ENCODE measurements at regions of chr9 and their contacts with region 1.

Region 1: DNA sequence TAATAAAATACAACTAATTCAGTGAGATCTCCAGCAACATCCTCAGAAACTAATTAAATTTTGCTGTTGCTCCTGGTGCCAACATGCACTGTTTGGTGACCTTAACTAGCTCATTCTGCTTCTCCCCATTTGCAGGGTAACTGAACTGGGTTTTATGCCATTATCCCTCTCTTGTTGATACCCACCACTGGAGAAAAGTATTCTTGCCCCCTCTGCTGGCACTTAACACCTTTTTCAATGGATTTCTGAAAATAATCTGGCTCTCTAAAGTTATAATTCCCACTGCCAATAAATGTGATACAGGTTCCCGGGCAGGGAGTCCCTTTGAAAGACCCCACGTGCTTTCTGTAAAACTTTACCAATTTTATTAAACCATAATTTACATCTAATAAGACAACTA is 394.3 kb downstream of the OSTF1 start:
- DNase-seq: no peak
- ATAC-seq: peak; percentile 61
- H3K4me3 Mint-ChIP-seq: no peak overlapping the region
- H3K27ac Mint-ChIP-seq: no peak overlapping the region
- H3K4me1 Mint-ChIP-seq: peaks cover 10% of the 10 kb centered on the region; the same call in 1 of the 2 replicates
- H3K27me3 Mint-ChIP-seq: peaks cover 3% of the 10 kb centered on the region; the same call in 1 of the 2 replicates
- CTCF ChIP-seq: no peak

Region 2: DNA sequence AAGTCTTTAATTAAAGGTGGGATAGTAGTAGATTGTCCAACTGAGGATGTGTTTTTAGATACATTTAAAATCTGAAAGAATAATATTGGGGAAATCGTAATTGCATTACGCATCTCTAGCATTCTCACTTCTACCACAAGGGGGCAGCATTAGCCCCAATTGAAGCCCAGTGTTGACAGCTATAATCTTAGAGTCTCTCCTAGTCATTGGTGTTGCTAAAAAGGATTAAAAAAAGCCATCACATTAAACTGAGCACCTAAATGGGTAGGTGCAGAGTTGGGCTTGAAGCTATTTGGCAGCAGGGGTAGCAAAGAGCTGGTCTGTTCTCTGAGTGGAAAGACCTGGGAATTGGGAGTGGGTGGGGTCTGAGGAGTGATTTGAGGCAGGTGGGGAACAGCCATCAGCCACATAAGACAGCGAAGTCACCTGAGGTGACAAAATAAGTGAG is 217.0 kb before region 1 on chr9:
- CTCF ChIA-PET with region 1: interaction called, 12 read pairs
- POLR2A ChIA-PET with region 1: no interaction called
- DNase-seq: peak; percentile 51
- ATAC-seq: peak; percentile 91
- H3K4me3 Mint-ChIP-seq: no peak overlapping the region
- H3K27ac Mint-ChIP-seq: no peak overlapping the region
- H3K4me1 Mint-ChIP-seq: peaks cover 7% of the 10 kb centered on the region
- H3K27me3 Mint-ChIP-seq: no peaks in the 10 kb centered on the region; the same call in 1 of the 2 replicates
- CTCF ChIP-seq: peak; percentile 79

Region 3: GRCh38 chr9:75333624-75334023 is 148.9 kb before region 1 on chr9:
- CTCF ChIA-PET with region 1: interaction called, 19 read pairs
- POLR2A ChIA-PET with region 1: no interaction called
- DNase-seq: no peak
- ATAC-seq: no peak
- H3K4me3 Mint-ChIP-seq: no peak overlapping the region
- H3K27ac Mint-ChIP-seq: no peak overlapping the region
- H3K4me1 Mint-ChIP-seq: no peaks in the 10 kb centered on the region
- H3K27me3 Mint-ChIP-seq: no peaks in the 10 kb centered on the region
- CTCF ChIP-seq: no peak

Region 4: DNA sequence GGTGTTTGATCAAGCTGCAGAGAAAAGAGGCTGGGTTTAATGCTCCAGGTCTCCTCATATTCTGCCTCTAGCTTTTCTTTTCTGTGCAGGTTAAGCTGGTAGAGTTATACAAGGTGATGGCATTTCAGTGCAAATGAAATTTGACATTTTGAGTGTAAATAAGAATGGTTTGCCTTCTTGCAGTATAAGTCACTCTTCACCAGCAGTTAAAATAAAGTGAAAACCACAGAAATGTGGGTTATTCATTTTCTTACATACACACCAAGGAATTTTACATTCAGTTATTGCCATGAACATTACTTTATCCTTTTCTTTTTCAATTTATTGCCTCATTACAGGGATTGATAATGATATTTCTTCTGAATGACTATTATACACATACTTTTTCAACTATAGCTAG is 70.4 kb after region 1 on chr9:
- CTCF ChIA-PET with region 1: no interaction called
- POLR2A ChIA-PET with region 1: no interaction called
- DNase-seq: no peak
- ATAC-seq: no peak
- H3K4me3 Mint-ChIP-seq: no peak overlapping the region
- H3K27ac Mint-ChIP-seq: no peak overlapping the region
- H3K4me1 Mint-ChIP-seq: no peaks in the 10 kb centered on the region
- H3K27me3 Mint-ChIP-seq: no peaks in the 10 kb centered on the region; the same call in 1 of the 2 replicates
- CTCF ChIP-seq: no peak

Measured in WTC11 (cell line).